WTC11 (cell line): ENCODE measurements at regions of chr7 and their contacts with region 1.

Region 1: DNA sequence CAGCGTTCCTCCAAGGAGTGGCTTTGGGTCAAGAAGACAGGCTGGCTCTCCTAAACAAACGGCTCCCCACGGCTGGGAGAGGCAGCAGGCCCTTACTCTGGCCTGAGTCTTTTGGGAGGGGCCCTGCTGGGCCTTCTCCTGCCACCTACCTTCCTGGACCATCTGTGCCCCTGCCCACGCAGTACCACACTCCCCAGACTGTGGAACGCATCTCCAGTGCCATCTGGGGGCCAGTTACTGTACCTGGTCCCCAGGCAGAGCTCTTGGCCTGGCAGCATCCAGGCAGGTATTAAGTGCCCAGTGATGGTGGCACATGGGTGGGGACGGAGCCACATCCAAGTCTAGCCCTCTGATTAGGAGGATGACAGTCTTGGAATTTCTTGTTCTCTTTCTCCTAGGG is 14.4 kb downstream of the ALKBH4 start:
- DNase-seq: no peak
- ATAC-seq: peak; percentile 11; the same call in 1 of the 2 replicates
- H3K4me3 Mint-ChIP-seq: no peak overlapping the region
- H3K27ac Mint-ChIP-seq: peak overlapping the region; percentile 68
- H3K4me1 Mint-ChIP-seq: peaks cover 9% of the 10 kb centered on the region
- H3K27me3 Mint-ChIP-seq: no peaks in the 10 kb centered on the region
- CTCF ChIP-seq: no peak

Region 2: DNA sequence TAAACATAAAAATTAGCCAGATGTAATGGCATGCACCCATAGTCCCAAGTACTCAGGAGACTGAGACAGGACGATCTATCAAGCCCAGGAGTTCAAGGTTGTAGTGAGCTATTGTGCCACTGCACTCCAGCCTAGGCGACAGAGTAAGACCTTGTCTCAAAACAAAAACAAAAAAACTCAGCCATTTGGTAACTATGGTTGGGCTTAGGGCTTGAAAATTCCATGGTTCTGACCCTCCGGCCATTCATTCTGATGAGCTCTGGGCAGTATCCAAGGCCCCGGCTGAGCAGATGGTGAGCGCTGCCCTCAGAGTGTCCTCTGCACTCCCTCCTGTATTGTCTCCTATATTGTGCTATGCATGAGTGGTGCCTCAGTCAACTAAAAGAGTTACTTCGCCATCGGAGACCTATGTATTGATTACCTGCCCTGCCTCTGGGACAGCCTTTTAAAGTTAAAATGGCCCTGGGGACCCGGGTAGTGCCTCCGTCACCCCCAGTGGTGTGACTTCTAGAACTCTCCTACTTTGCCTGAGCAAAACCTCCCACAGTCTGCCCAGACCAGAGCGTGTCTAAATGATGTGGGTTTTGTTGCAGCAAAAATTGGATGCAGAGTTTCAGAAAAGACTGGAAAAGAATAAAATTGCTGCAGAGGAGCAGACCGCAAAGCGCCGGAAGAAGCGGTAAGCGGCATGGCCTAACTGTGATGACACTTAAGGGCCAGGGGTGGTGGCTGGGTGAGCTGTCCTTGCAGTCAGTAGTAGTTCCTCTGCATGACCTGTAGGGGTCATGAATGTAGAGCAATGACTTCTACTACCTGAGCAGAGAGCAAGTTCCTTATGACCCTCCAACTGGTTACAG is 46.0 kb before region 1 on chr7:
- CTCF ChIA-PET with region 1: interaction called, 13 read pairs
- POLR2A ChIA-PET with region 1: no interaction called
- DNase-seq: peak; percentile 53
- ATAC-seq: peak; percentile 100
- H3K4me3 Mint-ChIP-seq: no peak overlapping the region
- H3K27ac Mint-ChIP-seq: peak overlapping the region; percentile 33; the same call in 1 of the 2 replicates
- H3K4me1 Mint-ChIP-seq: no peaks in the 10 kb centered on the region
- H3K27me3 Mint-ChIP-seq: no peaks in the 10 kb centered on the region
- CTCF ChIP-seq: peak; percentile 65